GM12878 (cell line): ENCODE measurements at regions of chrX and their contacts with region 1.

Region 1: GRCh38 chrX:120457766-120458180 is 11.3 kb downstream of the LAMP2 start:
- DNase-seq: peak; percentile 12
- ATAC-seq: peak; percentile 86
- H3K4me3 ChIP-seq: no peak overlapping the region
- H3K27ac ChIP-seq: peak overlapping the region; percentile 12; the same call in 1 of the 2 replicates
- H3K4me1 ChIP-seq: peaks cover 10% of the 10 kb centered on the region
- H3K27me3 ChIP-seq: no peaks in the 10 kb centered on the region
- CTCF ChIP-seq: no peak
- EP300 ChIP-seq: no peak
- POLR2A ChIP-seq: no peak
- RAD21 ChIP-seq: no peak

Region 2: GRCh38 chrX:120244735-120245498 is 212.9 kb before region 1 on chrX:
- CTCF ChIA-PET with region 1: no interaction called
- POLR2A ChIA-PET with region 1: no interaction called
- RAD21 ChIA-PET with region 1: no interaction called
- SMC1A ChIA-PET with region 1: no interaction called
- in situ Hi-C with region 1: no loop called
- intact Hi-C with region 1: loop called (anchors 10 kb)
- DNase-seq: no peak
- ATAC-seq: peak; percentile 84
- H3K4me3 ChIP-seq: peak overlapping the region; percentile 71
- H3K27ac ChIP-seq: peak overlapping the region; percentile 65
- H3K4me1 ChIP-seq: no peaks in the 10 kb centered on the region
- H3K27me3 ChIP-seq: no peaks in the 10 kb centered on the region
- CTCF ChIP-seq: no peak
- EP300 ChIP-seq: 0 out of 4 replicates have a peak, but pooled peaks of 1 of the 2 experiments have one; percentile 19
- POLR2A ChIP-seq: peak; percentile 53; the same call in 1 of the 2 replicates
- RAD21 ChIP-seq: no peak

Region 3: GRCh38 chrX:120316589-120317283 is 141.0 kb before region 1 on chrX:
- CTCF ChIA-PET with region 1: interaction called, 7 read pairs
- POLR2A ChIA-PET with region 1: no interaction called
- RAD21 ChIA-PET with region 1: no interaction called
- SMC1A ChIA-PET with region 1: no interaction called
- in situ Hi-C with region 1: no loop called
- intact Hi-C with region 1: loop called (anchors 5 kb)
- DNase-seq: no peak
- ATAC-seq: no peak
- H3K4me3 ChIP-seq: no peak overlapping the region
- H3K27ac ChIP-seq: no peak overlapping the region
- H3K4me1 ChIP-seq: no peaks in the 10 kb centered on the region
- H3K27me3 ChIP-seq: no peaks in the 10 kb centered on the region; a peak in 1 of 4 replicates
- CTCF ChIP-seq: no peak
- EP300 ChIP-seq: no peak
- POLR2A ChIP-seq: no peak
- RAD21 ChIP-seq: no peak

Region 4: GRCh38 chrX:120419463-120419862 is 38.3 kb before region 1 on chrX:
- CTCF ChIA-PET with region 1: no interaction called
- POLR2A ChIA-PET with region 1: no interaction called
- RAD21 ChIA-PET with region 1: no interaction called
- SMC1A ChIA-PET with region 1: no interaction called
- in situ Hi-C with region 1: no loop called
- intact Hi-C with region 1: no loop called
- DNase-seq: no peak
- ATAC-seq: peak; percentile 22; the same call in 1 of the 3 replicates
- H3K4me3 ChIP-seq: no peak overlapping the region
- H3K27ac ChIP-seq: peak overlapping the region; percentile 29; the same call in 1 of the 2 replicates
- H3K4me1 ChIP-seq: no peaks in the 10 kb centered on the region; the same call in 1 of the 2 replicates
- H3K27me3 ChIP-seq: no peaks in the 10 kb centered on the region
- CTCF ChIP-seq: no peak
- EP300 ChIP-seq: no peak
- POLR2A ChIP-seq: no peak
- RAD21 ChIP-seq: no peak